H1 (cell line): ENCODE measurements at regions of chr6 and their contacts with region 1.

Region 1: DNA sequence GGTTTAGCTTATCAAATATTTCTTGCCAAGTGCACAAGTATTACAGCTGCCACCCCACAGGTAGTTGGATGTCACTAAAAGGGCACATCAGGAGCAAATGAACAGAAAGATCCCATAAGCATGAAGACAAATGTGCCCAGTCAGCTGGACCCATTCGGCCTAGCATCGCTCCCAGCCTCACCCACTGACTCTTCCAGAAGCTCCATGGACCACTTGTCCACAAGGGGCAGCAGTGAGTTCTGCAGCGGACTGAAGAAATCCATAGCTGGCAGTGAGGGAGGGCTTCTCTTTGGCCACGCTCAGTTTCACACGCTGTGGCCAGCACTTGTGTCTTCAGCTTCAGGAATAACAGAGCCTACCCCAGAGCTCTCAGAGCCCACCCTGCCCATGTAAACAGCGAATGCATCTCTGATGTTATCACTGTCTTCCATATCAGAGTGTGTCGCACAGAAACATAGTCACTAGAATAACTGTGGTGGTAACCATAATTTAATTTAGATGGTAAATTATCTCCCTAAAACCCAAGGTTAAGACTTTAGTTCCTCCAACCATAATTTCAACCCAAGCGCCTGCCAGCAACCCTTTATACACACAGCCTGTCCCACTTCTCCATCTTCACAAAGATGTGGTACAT is 15.8 kb downstream of the CGA start:
- DNase-seq: peak; percentile 51 to 88
- H3K4me3 ChIP-seq: no peak overlapping the region
- H3K27ac ChIP-seq: no peak overlapping the region
- H3K4me1 ChIP-seq: no peaks in the 10 kb centered on the region
- H3K27me3 ChIP-seq: no peaks in the 10 kb centered on the region
- CTCF ChIP-seq: peak; percentile 84 to 99 (median 97)
- EP300 ChIP-seq: no peak
- POLR2A ChIP-seq: no peak
- RAD21 ChIP-seq: peak; percentile 68 to 78

Region 2: DNA sequence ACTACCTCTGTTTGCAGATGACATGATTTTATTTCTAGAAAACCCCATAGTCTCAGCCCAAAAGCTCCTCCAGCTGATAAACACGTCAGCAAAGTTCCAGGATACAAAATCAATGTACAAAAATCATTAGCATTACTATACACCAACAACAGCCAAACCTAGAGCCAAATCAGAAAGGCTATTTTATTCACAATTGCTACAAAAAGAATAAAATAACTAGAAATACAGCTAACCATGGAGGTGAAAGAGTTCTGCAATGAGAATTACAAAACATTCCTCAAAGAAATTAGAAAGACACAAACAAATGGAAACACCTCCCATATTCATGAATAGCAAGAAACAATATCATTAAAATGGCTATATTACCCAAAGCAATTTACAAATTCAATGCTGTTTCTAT is 207.4 kb before region 1 on chr6:
- CTCF ChIA-PET with region 1: no interaction called
- POLR2A ChIA-PET with region 1: no interaction called
- DNase-seq: no peak
- H3K4me3 ChIP-seq: no peak overlapping the region
- H3K27ac ChIP-seq: no peak overlapping the region
- H3K4me1 ChIP-seq: no peaks in the 10 kb centered on the region
- H3K27me3 ChIP-seq: no peaks in the 10 kb centered on the region
- CTCF ChIP-seq: no peak
- EP300 ChIP-seq: no peak
- POLR2A ChIP-seq: no peak
- RAD21 ChIP-seq: no peak

Region 3: GRCh38 chr6:87066449-87067333 is 12.4 kb before region 1 on chr6:
- CTCF ChIA-PET with region 1: interaction called, 67 read pairs
- POLR2A ChIA-PET with region 1: no interaction called
- DNase-seq: no peak
- H3K4me3 ChIP-seq: no peak overlapping the region
- H3K27ac ChIP-seq: no peak overlapping the region
- H3K4me1 ChIP-seq: peaks cover 0 to 3% (median 1%) of the 10 kb centered on the region in 4 experiments; a peak in 1 of 7 replicates
- H3K27me3 ChIP-seq: no peaks in the 10 kb centered on the region
- CTCF ChIP-seq: peak in 2 of 3 experiments; percentile 46 to 58; a peak in 3 of 4 replicates
- EP300 ChIP-seq: no peak
- POLR2A ChIP-seq: no peak
- RAD21 ChIP-seq: peak; percentile 86 to 88

Region 4: GRCh38 chr6:87099472-87099871 is 20.4 kb after region 1 on chr6:
- CTCF ChIA-PET with region 1: interaction called, 10 read pairs
- POLR2A ChIA-PET with region 1: no interaction called
- DNase-seq: no peak
- H3K4me3 ChIP-seq: no peak overlapping the region
- H3K27ac ChIP-seq: no peak overlapping the region
- H3K4me1 ChIP-seq: no peaks in the 10 kb centered on the region
- H3K27me3 ChIP-seq: no peaks in the 10 kb centered on the region
- CTCF ChIP-seq: no peak
- EP300 ChIP-seq: no peak
- POLR2A ChIP-seq: no peak
- RAD21 ChIP-seq: no peak